ENCODE measurements at regions of chr2 and their contacts with region 1.

Region 1: GRCh38 chr2:26846328-26847306 is 1.3 kb upstream of the DPYSL5 start:
- DNase-seq: peak; percentile 50
- H3K4me3 Mint-ChIP-seq: peak overlapping the region; percentile 65
- H3K27ac Mint-ChIP-seq: peak overlapping the region; percentile 50
- H3K4me1 Mint-ChIP-seq: no peaks in the 10 kb centered on the region
- H3K27me3 Mint-ChIP-seq: peaks cover 47% of the 10 kb centered on the region

Region 2: DNA sequence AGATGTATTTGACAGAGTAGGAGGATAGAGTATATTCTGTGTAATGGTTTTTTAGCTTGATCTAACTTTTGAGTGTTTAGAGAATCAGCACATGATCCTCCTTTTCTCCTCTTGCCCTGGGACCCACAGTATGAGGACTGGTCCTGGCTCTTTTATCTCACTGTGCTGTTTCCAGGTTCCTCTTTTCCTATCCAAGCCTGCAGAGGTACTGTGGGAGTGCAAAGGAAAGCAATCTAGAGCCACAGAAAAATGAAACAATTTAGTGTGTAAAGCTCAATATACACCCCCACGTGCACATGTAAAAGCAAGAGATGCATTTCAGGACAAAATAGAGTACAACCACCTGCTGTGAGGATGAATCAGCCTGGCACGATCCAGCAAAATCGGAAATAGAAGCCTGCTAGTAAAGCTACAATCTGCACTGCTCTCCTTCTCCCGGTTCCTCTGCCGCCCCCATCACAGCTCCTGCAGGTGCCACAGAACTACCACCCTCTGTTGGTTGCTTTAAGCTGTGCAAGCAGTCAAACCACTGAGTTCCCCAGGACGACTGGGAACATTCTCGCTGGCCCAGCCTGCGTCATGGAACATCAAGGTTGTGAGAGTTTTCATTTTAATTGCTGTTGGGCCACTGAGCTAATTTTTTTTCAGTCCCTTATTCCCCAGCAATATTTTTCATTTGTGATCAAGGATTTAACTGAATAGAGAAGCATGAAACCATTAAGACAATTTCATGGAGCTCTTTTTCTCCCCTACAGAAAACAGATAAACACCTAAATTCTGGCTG is 76.0 kb after region 1 on chr2:
- intact Hi-C with region 1: loop called (anchors 1 kb)
- DNase-seq: no peak
- H3K4me3 Mint-ChIP-seq: no peak overlapping the region
- H3K27ac Mint-ChIP-seq: no peak overlapping the region
- H3K4me1 Mint-ChIP-seq: no peaks in the 10 kb centered on the region
- H3K27me3 Mint-ChIP-seq: peaks cover 13% of the 10 kb centered on the region

Region 3: DNA sequence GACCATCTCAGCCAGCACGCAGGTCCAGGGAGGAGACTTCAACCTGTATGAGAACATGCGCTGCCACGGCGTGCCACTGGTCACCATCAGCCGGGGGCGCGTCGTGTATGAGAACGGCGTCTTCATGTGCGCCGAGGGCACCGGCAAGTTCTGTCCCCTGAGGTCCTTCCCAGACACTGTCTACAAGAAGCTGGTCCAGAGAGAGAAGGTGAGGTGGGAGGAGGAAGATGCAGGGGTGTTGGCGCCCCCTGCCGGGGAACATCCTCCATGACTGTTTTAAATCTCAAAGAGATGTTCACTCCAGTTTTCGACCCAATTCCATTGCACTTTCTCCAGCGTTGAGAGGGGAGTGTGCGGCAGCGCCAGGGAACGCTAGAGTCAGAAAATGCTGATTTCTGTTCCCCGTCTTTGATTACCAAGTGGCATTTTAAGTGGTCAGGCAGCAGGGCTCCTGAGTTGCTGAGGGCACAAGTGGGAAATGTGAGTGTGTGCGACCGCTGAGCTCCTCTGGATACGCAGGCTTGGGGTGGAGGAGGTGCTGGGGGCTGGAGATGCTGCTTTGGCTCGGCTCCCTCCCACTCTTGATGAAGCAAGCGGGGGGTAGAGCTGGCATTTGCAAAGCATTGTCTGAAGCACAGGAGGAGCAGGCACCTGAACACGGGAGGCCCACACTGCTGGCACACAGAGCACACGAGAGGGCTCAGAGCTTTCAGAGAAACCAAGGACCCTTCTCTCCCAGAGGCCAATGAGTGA is 96.1 kb after region 1 on chr2:
- intact Hi-C with region 1: loop called (anchors 1 kb)
- DNase-seq: peak; percentile 43
- H3K4me3 Mint-ChIP-seq: no peak overlapping the region
- H3K27ac Mint-ChIP-seq: no peak overlapping the region
- H3K4me1 Mint-ChIP-seq: peaks cover 4% of the 10 kb centered on the region
- H3K27me3 Mint-ChIP-seq: peaks cover 6% of the 10 kb centered on the region

Region 4: DNA sequence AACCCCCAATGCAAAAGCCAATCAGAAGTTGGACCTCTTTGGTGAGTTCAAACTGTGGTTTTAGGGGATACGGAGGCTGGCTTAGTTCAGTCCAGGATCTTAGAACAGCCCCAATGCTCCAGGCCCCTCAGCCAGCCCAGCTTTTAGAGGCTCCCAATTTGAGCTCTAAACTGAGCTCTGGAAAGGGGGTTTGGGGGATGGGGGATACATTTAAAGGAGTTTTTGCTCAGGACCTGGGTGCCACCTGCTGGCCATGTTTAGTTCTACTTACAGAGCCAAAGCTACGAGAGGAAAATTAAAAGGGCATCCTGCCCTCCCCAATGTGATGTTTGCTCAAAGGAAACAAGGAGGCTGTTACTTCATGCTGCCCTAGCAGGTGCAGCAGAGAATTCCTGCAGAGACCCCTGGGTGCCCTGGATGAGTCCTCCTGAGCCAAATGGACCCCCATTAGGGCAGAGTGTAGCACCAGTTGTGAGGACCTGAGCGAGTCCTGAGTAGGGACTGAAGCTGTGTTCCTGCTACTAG is 170.2 kb after region 1 on chr2:
- intact Hi-C with region 1: loop called (anchors 1 kb)
- DNase-seq: no peak
- H3K4me3 Mint-ChIP-seq: no peak overlapping the region
- H3K27ac Mint-ChIP-seq: no peak overlapping the region
- H3K4me1 Mint-ChIP-seq: no peaks in the 10 kb centered on the region
- H3K27me3 Mint-ChIP-seq: no peaks in the 10 kb centered on the region

Region 5: DNA sequence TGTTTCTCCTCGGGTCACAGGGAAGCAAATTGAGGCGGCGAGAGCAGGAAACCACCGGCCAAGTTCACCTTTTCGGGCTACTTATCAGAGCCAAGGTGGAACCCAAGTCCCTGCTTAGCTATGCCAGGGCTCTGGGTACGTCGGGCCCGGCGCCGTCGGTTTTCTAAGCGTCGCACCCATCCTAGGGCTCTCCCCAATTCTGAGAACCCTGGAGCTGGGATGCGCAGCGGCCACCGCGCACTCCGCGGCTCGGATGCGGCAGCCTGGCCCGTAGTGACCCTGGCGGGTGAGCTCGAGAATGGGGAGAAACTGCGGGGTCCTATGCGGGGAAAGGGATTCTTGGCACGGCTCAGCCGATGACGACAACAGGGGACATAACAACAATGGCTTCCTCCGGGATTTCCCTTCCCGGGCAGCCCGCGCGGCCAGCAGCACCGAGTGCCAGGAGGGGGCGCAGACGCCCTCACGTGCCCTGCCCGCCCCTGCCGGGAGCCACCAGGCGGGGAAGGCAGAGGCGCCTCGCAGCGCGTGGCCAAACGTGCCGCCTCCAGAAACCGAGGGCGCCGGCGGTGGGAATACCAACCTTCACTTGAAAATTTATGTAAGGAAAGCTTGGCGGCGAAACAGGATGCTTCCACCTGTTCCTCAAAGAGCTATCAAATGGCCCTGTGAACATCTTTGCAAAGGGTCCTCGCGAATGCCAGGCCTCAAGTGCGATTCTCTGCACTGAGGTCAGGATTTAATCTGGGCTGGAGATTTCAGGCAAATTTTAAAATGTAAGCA is 418.3 kb after region 1 on chr2:
- intact Hi-C with region 1: loop called (anchors 2 kb)
- DNase-seq: peak; percentile 32
- H3K4me3 Mint-ChIP-seq: peak overlapping the region; percentile 43
- H3K27ac Mint-ChIP-seq: peak overlapping the region; percentile 7
- H3K4me1 Mint-ChIP-seq: peaks cover 14% of the 10 kb centered on the region
- H3K27me3 Mint-ChIP-seq: peaks cover 44% of the 10 kb centered on the region